CD8-positive, alpha-beta T cell (primary cell): ENCODE measurements at regions of chr17 and their contacts with region 1.

Region 1: DNA sequence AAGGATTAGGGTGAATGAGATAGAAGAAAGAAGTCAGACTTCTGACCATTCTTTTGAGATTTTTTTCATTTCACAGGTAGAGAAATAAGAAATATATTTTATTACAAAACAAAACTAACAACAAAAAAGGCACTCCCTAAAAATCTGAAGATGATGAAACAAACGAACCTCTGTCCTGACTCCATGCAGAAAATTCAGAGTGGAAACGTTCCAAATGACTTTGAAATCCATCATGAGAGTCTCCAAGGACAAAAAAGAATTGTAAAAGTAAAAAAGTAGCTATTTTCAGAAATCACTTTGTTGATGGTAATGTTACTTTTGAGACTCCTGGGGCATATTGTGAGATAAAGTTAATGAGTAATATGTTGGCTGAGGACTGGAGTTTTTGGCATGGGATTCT is 26.4 kb upstream of the MNT start:
- DNase-seq: no peak
- ATAC-seq: no peak
- H3K4me3 ChIP-seq: no peak overlapping the region
- H3K4me3 Mint-ChIP-seq: no peak overlapping the region
- H3K27ac ChIP-seq: no peak overlapping the region
- H3K27ac Mint-ChIP-seq: no peak overlapping the region
- H3K4me1 ChIP-seq: no peaks in the 10 kb centered on the region
- H3K4me1 Mint-ChIP-seq: no peaks in the 10 kb centered on the region
- H3K27me3 ChIP-seq: no peaks in the 10 kb centered on the region
- H3K27me3 Mint-ChIP-seq: no peaks in the 10 kb centered on the region
- CTCF ChIP-seq: no peak

Region 2: DNA sequence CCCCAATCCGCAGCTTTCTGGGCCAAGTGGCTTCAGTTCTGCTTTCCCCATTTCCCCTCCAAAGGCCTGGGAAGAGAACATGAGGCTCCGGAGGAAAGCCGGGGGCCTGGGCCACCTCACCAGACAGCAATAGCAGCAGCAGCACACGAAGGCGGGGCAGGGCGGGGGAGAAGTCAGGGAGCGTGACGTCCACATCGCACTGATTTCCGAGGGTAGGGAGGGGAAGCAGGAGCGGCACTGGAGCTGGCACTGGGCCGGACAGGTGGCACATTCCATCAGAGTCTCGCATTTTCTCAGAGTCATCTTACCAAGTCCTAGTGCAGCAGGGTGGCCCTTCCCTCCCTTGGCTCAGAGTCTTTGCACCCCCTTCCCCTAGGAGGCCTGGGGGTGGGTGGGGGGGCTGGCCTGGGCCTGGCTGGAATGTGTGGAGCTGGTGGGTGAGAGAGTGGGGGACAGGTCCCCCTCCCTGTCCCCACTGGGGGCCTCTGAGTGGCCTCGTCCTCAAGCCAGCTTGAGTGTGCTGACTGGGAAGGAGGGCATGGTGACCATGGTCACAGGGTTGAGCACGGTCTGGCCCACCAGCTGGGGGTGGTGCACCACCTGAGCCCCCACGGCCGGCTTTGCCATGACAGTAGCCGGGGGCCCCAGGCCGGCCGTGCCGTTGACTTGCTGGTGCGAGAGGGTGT is 40.7 kb before region 1 on chr17:
- CTCF ChIA-PET with region 1: interaction called, 24 read pairs
- POLR2A ChIA-PET with region 1: no interaction called
- intact Hi-C with region 1: no loop called
- DNase-seq: no peak
- ATAC-seq: no peak
- H3K4me3 ChIP-seq: no peak overlapping the region
- H3K4me3 Mint-ChIP-seq: no peak overlapping the region
- H3K27ac ChIP-seq: no peak overlapping the region
- H3K27ac Mint-ChIP-seq: no peak overlapping the region
- H3K4me1 ChIP-seq: peaks cover 25% of the 10 kb centered on the region
- H3K4me1 Mint-ChIP-seq: peaks cover 24% of the 10 kb centered on the region
- H3K27me3 ChIP-seq: no peaks in the 10 kb centered on the region
- H3K27me3 Mint-ChIP-seq: no peaks in the 10 kb centered on the region
- CTCF ChIP-seq: no peak

Region 3: DNA sequence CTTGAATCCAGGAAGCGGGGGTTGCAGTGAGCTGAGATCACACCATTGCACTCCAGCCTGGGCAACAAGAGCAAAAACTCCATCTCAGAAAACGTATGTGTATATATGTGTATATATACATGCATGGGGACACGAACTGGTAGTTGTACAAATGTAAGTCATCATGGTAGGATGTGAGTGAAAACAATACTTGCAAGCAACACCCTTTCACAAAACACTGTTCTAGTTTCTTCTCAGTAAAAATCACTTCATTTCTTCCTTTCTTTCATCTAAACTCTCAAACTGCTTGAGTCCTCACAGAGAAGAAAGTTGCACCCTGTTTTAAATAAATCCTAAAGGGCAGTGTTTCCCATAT is 32.7 kb after region 1 on chr17:
- CTCF ChIA-PET with region 1: no interaction called
- POLR2A ChIA-PET with region 1: no interaction called
- intact Hi-C with region 1: no loop called
- DNase-seq: no peak
- ATAC-seq: no peak
- H3K4me3 ChIP-seq: no peak overlapping the region
- H3K4me3 Mint-ChIP-seq: no peak overlapping the region
- H3K27ac ChIP-seq: no peak overlapping the region
- H3K27ac Mint-ChIP-seq: no peak overlapping the region
- H3K4me1 ChIP-seq: no peaks in the 10 kb centered on the region
- H3K4me1 Mint-ChIP-seq: no peaks in the 10 kb centered on the region
- H3K27me3 ChIP-seq: no peaks in the 10 kb centered on the region
- H3K27me3 Mint-ChIP-seq: no peaks in the 10 kb centered on the region
- CTCF ChIP-seq: no peak

Region 4: DNA sequence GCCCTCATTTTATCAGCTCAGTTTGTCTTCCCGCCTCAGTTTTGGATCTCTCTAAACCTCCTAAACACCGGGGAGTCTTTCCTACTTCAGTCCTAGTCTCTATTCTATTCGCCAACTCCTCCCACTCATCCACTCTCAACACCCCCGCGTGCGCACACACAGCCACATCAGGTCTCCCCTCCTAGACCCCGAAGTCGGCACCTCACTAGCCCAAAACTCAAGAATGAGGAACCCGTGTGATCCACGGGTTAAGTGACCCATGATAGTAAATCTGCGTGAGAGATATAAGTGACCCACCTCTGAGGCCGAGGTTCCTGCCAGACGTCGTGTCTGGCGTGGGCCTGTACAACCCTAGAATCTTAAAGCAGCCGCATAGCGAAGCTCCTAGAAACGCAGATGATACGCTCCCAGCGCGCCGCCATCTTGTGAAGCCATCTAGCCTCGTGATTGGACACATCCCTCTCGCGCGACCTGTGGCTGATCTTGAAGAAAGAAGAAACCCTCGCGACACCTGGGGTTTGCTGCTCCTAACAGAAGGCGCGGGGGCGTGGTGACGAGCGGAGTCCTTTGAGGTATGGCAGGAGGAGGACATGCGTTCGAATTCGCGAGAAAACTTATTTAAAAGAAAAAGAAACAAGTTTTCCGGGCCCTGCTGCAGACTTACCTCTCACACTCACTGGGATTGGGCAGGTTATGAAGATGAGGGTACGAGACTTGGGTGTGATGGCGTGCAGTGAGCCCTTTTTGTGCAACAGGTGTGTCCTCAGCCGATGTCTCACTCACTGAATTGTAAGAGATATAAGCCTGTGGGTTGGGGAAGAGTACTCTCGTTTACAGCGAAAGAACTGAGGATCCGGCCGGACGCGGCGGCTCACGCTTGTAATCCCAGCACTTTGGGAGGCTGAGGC is 84.5 kb after region 1 on chr17 and contains the start of gene METTL16:
- CTCF ChIA-PET with region 1: no interaction called
- POLR2A ChIA-PET with region 1: no interaction called
- intact Hi-C with region 1: no loop called
- DNase-seq: peak; percentile 92 to 99 (median 96)
- ATAC-seq: peak; percentile 97
- H3K4me3 ChIP-seq: peak within 1 kb of the TSS; percentile 81 to 84
- H3K4me3 Mint-ChIP-seq: no peak within 1 kb of the TSS
- H3K27ac ChIP-seq: peak within 1 kb of the TSS; percentile 96 to 97
- H3K27ac Mint-ChIP-seq: no peak within 1 kb of the TSS
- H3K4me1 ChIP-seq: peaks cover 35% of the 10 kb centered on the region
- H3K4me1 Mint-ChIP-seq: peaks cover 21% of the 10 kb centered on the region
- H3K27me3 ChIP-seq: no peaks in the 10 kb centered on the region
- H3K27me3 Mint-ChIP-seq: no peaks in the 10 kb centered on the region
- CTCF ChIP-seq: no peak
- total RNA-seq, gene METTL16: 59.8 to 69.5 TPM